Activated T-helper 2 cell treated with anti-CD3 and anti-CD28 coated beads, Interferon-gamma antibody, Interleukin-2, Interleukin-4, amounts not matched to agents 10 μg/mL and 5 μg/mL and 100 μg/mL, durations not matched to agents 14 hours and 24 hours and 36 hours (primary cell): ENCODE measurements at regions of chr2 and their contacts with region 1.

Region 1: GRCh38 chr2:47906157-47907038 is at the start of gene FBXO11:
- DNase-seq: peak; percentile 95
- H3K4me3 Mint-ChIP-seq: peak within 1 kb of the TSS; percentile 80
- H3K27ac Mint-ChIP-seq: peak within 1 kb of the TSS; percentile 94
- H3K4me1 Mint-ChIP-seq: peaks cover 44% of the 10 kb centered on the region
- H3K27me3 Mint-ChIP-seq: no peaks in the 10 kb centered on the region
- total RNA-seq, gene FBXO11: 57.9 and 58.6 TPM in 2 replicates

Region 2: GRCh38 chr2:47402805-47403608 is 503.4 kb before region 1 on chr2 and contains the start of gene MSH2:
- intact Hi-C with region 1: loop called (anchors 5 kb)
- DNase-seq: peak; percentile 92
- H3K4me3 Mint-ChIP-seq: peak within 1 kb of the TSS; percentile 99
- H3K27ac Mint-ChIP-seq: peak within 1 kb of the TSS; percentile 94
- H3K4me1 Mint-ChIP-seq: peaks cover 27% of the 10 kb centered on the region
- H3K27me3 Mint-ChIP-seq: no peaks in the 10 kb centered on the region
- total RNA-seq, gene MSH2: 66.2 and 66.7 TPM in 2 replicates

Region 3: DNA sequence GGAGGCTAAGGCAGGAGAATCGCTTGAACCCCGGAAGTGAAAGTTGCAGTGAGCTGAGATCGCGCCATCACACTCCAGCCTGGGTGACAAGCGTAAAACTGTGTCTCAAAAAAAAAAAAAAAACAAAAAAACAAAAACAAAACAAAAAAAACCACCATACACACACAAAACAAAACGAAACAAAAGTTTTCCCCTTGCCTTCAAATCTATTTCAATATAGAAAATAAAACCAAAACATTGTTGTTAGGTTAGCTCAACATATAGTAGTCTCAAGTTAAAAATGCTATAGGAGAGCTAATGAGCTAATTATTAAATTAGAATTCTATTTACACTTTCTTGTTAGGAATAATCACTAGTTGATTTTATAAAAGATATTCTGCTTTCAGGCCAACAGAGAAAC is 43.4 kb before region 1 on chr2:
- intact Hi-C with region 1: loop called (anchors 5 kb)
- DNase-seq: no peak
- H3K4me3 Mint-ChIP-seq: no peak overlapping the region
- H3K27ac Mint-ChIP-seq: no peak overlapping the region
- H3K4me1 Mint-ChIP-seq: peaks cover 21% of the 10 kb centered on the region
- H3K27me3 Mint-ChIP-seq: no peaks in the 10 kb centered on the region

Region 4: DNA sequence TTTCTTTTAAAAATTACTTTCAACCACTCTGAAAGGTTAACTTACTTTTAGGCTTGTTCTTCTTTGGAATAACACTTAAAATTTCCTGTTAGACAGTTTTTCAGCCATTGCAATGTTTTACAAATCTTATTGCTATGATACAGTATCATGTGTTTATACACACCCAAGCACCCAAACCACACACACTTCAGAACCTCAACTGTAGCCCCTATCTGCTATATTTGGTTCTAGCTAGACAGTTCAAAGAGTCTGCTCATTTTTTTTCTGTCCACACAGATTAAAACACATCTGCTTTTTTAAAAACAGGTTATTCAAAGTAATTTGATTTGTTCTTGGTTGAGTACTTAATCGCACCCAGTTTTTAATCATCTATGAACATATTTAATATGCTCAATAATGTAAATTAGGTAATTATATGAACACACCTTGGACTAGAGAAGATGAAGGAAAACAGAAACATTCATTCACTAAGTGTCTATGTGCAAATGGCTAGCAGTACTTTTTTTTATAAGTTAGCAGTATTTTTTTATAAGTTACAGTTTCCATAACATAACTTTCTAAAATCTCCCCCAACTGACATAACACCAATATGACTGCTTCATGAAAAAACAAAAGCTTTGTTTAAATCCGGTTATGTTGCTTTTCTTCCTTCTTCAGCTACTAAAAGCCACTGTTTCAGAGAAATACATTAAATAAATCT is 17.7 kb before region 1 on chr2:
- intact Hi-C with region 1: no loop called
- DNase-seq: no peak
- H3K4me3 Mint-ChIP-seq: no peak overlapping the region
- H3K27ac Mint-ChIP-seq: peak overlapping the region; percentile 59
- H3K4me1 Mint-ChIP-seq: peaks cover 37% of the 10 kb centered on the region
- H3K27me3 Mint-ChIP-seq: no peaks in the 10 kb centered on the region

Region 5: GRCh38 chr2:48105848-48106247 is 199.4 kb after region 1 on chr2:
- intact Hi-C with region 1: loop called (anchors 1 kb)
- DNase-seq: no peak
- H3K4me3 Mint-ChIP-seq: no peak overlapping the region
- H3K27ac Mint-ChIP-seq: no peak overlapping the region
- H3K4me1 Mint-ChIP-seq: peaks cover 18% of the 10 kb centered on the region
- H3K27me3 Mint-ChIP-seq: peaks cover 14% of the 10 kb centered on the region

Region 6: GRCh38 chr2:48420512-48421197 is 514.3 kb after region 1 on chr2:
- intact Hi-C with region 1: loop called (anchors 1 kb)
- DNase-seq: peak; percentile 90
- H3K4me3 Mint-ChIP-seq: peak overlapping the region; percentile 43
- H3K27ac Mint-ChIP-seq: peak overlapping the region; percentile 62
- H3K4me1 Mint-ChIP-seq: peaks cover 34% of the 10 kb centered on the region
- H3K27me3 Mint-ChIP-seq: peaks cover 5% of the 10 kb centered on the region